Right ventricle myocardium superior (tissue), 1 donor: ENCODE measurements at regions of chr11 and their contacts with region 1.

Region 1: DNA sequence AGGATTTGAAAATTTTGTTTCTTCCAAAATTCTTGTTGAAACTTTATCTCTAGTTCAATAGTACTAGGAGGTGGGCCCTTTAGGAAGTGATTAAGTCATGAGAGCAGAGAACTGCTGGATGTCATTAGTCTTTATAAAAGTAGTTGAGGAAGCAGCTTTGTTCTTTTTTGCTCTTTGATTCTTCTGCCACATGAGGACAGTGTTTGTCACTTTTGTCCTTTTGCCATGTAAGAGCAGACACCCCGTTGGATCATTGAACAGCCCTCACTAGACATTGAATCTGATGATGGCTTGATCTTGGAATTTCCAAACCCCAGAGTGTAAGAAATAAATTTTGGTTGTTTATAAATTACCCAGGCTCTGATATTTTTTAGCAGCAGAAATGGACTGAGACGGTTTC is 61.7 kb downstream of the LUZP2 start:
- DNase-seq: no peak
- ATAC-seq: no peak

Region 2: GRCh38 chr11:24406389-24406788 is 152.2 kb before region 1 on chr11:
- intact Hi-C with region 1: no loop called
- DNase-seq: no peak
- ATAC-seq: no peak

Region 3: DNA sequence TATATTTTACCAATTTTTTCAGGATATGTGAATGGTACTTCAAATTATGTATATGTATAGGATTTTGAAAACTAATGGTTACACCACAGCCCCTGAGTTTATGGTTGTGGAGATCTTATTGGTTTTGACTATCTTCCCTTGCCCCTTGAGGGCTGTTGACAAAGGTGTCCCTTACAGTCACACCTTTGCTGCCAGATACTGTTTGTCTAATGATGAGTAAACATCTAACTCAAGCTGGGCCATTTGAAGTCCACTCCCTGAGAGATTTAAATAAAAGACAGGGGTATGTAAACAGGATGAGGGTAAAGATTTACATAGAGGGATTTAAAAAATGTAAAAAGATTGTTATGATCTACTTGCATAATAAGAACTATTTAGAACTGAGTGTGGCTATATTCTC is 100.6 kb before region 1 on chr11:
- intact Hi-C with region 1: no loop called
- DNase-seq: no peak
- ATAC-seq: no peak

Region 4: DNA sequence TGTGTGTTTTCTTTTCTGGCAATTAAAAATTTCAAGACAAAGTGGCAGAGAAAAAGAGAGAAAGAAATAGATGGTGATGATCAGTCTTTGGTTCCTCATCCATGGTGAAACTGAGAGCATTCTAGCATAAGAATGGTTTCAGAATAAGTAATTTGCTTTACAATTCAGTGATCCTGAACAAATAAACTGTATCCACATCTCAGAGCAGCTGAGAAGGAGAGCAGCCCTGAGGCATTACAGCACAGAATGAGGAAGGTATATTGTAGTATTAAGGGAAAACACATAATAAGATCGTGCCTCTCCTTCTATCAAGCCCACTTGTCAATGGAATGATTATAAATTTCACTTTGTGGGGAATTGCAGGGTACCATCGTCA is 44.4 kb before region 1 on chr11:
- intact Hi-C with region 1: no loop called
- DNase-seq: no peak
- ATAC-seq: peak; percentile 41

Region 5: DNA sequence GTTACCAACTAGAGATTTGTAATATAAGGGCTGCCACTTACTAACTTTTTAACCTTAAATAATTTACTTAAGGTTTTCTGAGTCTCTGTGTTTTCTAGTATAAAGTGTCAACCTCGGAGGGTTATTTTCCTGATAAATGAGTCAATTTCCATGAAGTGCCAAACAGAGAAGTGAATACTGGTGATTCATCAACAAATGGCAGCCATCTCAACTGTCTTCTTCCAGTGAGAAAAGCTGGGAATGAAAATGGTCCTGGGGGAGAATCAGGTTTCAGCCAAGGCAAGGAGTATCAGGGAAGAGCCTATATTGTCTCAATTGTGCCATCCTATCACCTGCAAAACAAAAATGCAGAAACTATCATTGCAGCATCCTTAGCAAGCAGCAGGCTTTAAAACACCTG is 67.4 kb after region 1 on chr11:
- intact Hi-C with region 1: loop called (anchors 2 kb)
- DNase-seq: no peak
- ATAC-seq: no peak